Sciatic nerve (tissue), 2 donors: ENCODE measurements at regions of chr17 and their contacts with region 1.

Region 1: GRCh38 chr17:20103454-20104446 is 94.6 kb downstream of the SPECC1 start:
- DNase-seq: no peak
- ATAC-seq: peak; percentile 30

Region 2: DNA sequence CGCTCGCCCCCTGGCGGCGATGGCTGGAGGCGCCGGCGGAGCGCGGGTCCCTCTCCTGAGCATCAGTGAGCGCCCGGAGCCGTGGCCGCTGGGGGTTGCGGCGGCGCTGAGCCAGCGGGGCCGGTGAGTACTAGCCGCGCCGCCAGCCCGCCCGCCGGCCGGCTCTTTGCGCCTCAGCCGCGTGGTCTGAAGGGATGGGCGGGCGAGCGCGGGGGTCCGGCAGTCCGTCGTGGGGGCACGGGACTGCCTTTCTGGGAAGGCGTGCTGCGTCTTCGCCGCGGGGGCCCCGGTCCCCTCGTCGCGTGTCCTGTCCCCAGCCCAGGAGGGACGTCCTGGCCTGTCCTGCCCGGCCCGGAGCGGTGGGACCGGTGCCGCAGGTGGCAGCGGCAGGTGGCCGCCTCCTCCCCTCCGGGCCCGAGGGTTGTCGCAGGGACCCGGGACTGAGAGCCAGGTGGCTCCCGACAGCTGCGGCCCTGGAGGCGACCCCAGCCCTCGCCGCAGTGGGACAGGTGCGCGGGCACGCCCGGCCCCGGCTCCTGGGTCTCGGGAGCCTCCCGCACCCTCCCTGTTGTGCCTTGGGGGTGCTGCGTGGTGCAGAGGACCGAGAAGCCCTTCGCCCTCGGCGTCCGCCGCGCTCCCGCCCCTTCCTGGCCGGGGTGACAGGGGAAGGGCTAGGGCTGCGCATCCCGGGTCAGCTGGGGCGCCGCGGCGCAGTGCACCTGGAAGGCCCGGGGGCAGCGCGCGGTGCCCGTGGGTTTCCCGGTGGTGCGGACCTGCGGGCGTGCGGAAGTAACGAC is 94.2 kb before region 1 on chr17 and contains the start of gene SPECC1:
- intact Hi-C with region 1: loop called (anchors 10 kb)
- DNase-seq: peak; percentile 86
- ATAC-seq: peak; percentile 41
- total RNA-seq, gene SPECC1: 53.6 TPM

Region 3: GRCh38 chr17:20174588-20175265 is 71.0 kb after region 1 on chr17:
- intact Hi-C with region 1: no loop called
- DNase-seq: no peak
- ATAC-seq: peak; percentile 62